A673 (cell line): ENCODE measurements at regions of chr2 and their contacts with region 1.

Region 1: GRCh38 chr2:154623819-154624218 is 74.7 kb upstream of the KCNJ3 start:
- DNase-seq: peak; percentile 72
- H3K4me3 ChIP-seq: no peak overlapping the region
- H3K27ac ChIP-seq: no peak overlapping the region
- H3K4me1 ChIP-seq: peaks cover 6% of the 10 kb centered on the region
- H3K27me3 ChIP-seq: no peaks in the 10 kb centered on the region
- CTCF ChIP-seq: peak; percentile 79

Region 2: GRCh38 chr2:153320879-153321278 is 1302.9 kb before region 1 on chr2:
- CTCF ChIA-PET with region 1: no interaction called
- POLR2A ChIA-PET with region 1: no interaction called
- intact Hi-C with region 1: no loop called
- DNase-seq: no peak
- H3K4me3 ChIP-seq: no peak overlapping the region
- H3K27ac ChIP-seq: no peak overlapping the region
- H3K4me1 ChIP-seq: no peaks in the 10 kb centered on the region
- H3K27me3 ChIP-seq: no peaks in the 10 kb centered on the region
- CTCF ChIP-seq: no peak

Region 3: DNA sequence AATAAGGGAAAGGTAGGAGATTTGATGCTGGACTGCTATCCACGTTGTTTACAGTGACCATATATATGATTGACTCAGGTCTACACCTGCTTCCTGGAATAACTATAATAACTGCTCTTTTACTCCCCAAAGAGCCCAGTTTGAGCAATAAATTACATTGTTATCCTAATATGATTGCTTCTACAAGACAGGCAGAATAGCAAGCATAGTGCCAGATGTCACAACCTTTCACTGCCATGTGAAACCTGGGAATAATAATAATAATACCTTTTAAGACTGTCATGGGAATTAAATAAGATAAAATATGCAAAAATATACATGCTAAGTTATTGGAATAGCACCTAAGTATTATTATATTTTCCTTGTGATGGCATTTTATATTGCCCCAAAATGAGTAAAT is 453.4 kb before region 1 on chr2:
- CTCF ChIA-PET with region 1: no interaction called
- POLR2A ChIA-PET with region 1: no interaction called
- intact Hi-C with region 1: no loop called
- DNase-seq: no peak
- H3K4me3 ChIP-seq: no peak overlapping the region
- H3K27ac ChIP-seq: no peak overlapping the region
- H3K4me1 ChIP-seq: no peaks in the 10 kb centered on the region
- H3K27me3 ChIP-seq: no peaks in the 10 kb centered on the region
- CTCF ChIP-seq: no peak

Region 4: GRCh38 chr2:154452906-154453493 is 170.8 kb before region 1 on chr2:
- CTCF ChIA-PET with region 1: no interaction called
- POLR2A ChIA-PET with region 1: no interaction called
- intact Hi-C with region 1: loop called (anchors 2 kb)
- DNase-seq: peak; percentile 57
- H3K4me3 ChIP-seq: no peak overlapping the region
- H3K27ac ChIP-seq: no peak overlapping the region
- H3K4me1 ChIP-seq: no peaks in the 10 kb centered on the region
- H3K27me3 ChIP-seq: no peaks in the 10 kb centered on the region
- CTCF ChIP-seq: peak; percentile 64

Region 5: GRCh38 chr2:154577390-154577789 is 46.4 kb before region 1 on chr2:
- CTCF ChIA-PET with region 1: no interaction called
- POLR2A ChIA-PET with region 1: no interaction called
- intact Hi-C with region 1: no loop called
- DNase-seq: no peak
- H3K4me3 ChIP-seq: no peak overlapping the region
- H3K27ac ChIP-seq: no peak overlapping the region
- H3K4me1 ChIP-seq: no peaks in the 10 kb centered on the region
- H3K27me3 ChIP-seq: no peaks in the 10 kb centered on the region
- CTCF ChIP-seq: no peak

Region 6: DNA sequence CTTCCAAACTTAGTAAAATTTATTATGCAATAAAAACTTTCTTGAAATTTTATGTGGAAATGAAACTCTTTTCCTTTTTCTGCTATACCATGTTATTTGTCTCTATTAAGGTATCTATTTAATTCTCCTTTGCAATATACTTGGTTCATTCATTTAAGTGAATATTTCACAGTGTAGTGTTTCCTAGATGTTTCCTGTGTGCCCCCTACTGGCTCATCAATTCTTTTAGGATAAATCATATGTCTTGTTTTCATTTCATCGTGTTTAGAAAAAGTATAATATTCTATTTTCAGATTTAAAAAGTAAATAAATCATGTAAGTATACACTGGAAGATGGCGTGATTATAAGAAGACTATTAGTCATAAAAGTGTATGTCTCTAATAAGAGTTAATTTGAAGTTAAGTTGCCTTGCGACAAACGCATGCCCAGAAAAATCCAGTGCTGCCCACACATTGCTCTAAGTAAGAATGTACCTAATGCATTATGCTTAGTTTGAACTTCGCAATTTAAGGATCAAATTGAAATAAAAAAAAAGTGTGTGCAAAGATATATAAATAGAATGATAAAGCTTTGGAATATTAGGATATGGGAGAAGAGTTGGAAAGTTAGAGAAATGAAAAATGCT is 600.1 kb after region 1 on chr2:
- CTCF ChIA-PET with region 1: no interaction called
- POLR2A ChIA-PET with region 1: no interaction called
- intact Hi-C with region 1: loop called (anchors 2 kb)
- DNase-seq: peak; percentile 39
- H3K4me3 ChIP-seq: no peak overlapping the region
- H3K27ac ChIP-seq: no peak overlapping the region
- H3K4me1 ChIP-seq: no peaks in the 10 kb centered on the region
- H3K27me3 ChIP-seq: no peaks in the 10 kb centered on the region
- CTCF ChIP-seq: peak; percentile 64

Region 7: GRCh38 chr2:155310589-155310988 is 686.8 kb after region 1 on chr2:
- CTCF ChIA-PET with region 1: no interaction called
- POLR2A ChIA-PET with region 1: no interaction called
- intact Hi-C with region 1: loop called (anchors 5 kb)
- DNase-seq: peak; percentile 48
- H3K4me3 ChIP-seq: no peak overlapping the region
- H3K27ac ChIP-seq: no peak overlapping the region
- H3K4me1 ChIP-seq: no peaks in the 10 kb centered on the region
- H3K27me3 ChIP-seq: no peaks in the 10 kb centered on the region
- CTCF ChIP-seq: peak; percentile 66

Region 8: GRCh38 chr2:155498106-155498505 is 874.3 kb after region 1 on chr2:
- CTCF ChIA-PET with region 1: no interaction called
- POLR2A ChIA-PET with region 1: no interaction called
- intact Hi-C with region 1: no loop called
- DNase-seq: no peak
- H3K4me3 ChIP-seq: no peak overlapping the region
- H3K27ac ChIP-seq: no peak overlapping the region
- H3K4me1 ChIP-seq: no peaks in the 10 kb centered on the region
- H3K27me3 ChIP-seq: no peaks in the 10 kb centered on the region
- CTCF ChIP-seq: no peak

Region 9: DNA sequence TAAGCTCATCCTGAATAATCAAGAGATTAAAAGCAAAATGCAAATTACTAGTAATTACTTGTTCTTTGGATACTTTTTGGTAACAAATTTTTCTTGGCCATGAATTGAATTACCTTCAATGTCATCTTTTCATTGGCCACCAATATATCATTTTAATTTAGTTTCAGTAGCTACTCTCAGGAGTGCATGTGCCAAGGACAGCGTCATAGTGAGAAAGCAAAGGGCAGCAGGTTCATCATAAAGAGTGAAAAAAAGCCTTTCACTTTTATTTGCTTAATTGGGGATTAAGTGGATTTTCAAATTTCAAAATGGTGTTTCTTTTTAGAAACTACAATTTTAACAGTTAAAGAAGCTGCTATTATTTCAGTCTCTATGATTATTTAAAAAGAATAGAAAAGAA is 893.5 kb after region 1 on chr2:
- CTCF ChIA-PET with region 1: interaction called, 11 read pairs
- POLR2A ChIA-PET with region 1: no interaction called
- intact Hi-C with region 1: no loop called
- DNase-seq: no peak
- H3K4me3 ChIP-seq: no peak overlapping the region
- H3K27ac ChIP-seq: no peak overlapping the region
- H3K4me1 ChIP-seq: no peaks in the 10 kb centered on the region
- H3K27me3 ChIP-seq: peaks cover 4% of the 10 kb centered on the region
- CTCF ChIP-seq: no peak